AG04450 (cell line): ENCODE measurements at regions of chr13 and their contacts with region 1.

Region 1: GRCh38 chr13:108508263-108508662 is 121.1 kb upstream of the MYO16 start:
- DNase-seq: no peak
- H3K4me3 ChIP-seq: no peak overlapping the region
- H3K27ac ChIP-seq: no peak overlapping the region
- H3K27me3 ChIP-seq: no peaks in the 10 kb centered on the region
- CTCF ChIP-seq: peak; percentile 54

Region 2: DNA sequence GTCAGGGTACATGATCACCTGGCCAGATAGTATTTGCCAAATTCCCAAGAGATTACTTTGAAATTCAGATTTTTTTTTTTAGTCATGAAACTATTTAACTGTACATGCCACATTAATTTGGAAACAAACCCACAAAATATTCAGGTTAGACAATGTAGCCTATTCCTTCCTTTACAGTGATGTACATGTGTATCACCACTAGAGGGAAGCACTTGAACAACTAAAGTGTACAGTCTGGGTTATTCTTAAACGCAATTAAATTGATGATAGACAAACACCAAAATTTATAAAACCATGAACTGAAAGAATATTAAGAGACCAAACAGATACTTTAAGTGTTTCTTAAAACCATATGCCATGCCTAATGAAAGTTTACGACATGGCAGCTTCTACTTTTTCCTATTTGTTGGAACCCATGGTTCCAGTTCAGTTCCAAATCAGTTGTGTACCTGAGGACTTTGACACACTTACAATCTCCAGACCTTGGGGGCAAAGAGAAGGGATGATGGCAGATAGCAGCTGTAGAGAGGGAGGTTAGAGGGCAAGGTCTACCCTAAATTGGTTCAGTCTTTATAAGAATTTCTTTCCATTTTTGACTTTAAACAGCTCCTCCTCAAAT is 185.9 kb before region 1 on chr13:
- CTCF ChIA-PET with region 1: interaction called, 18 read pairs
- POLR2A ChIA-PET with region 1: no interaction called
- DNase-seq: peak; percentile 4
- H3K4me3 ChIP-seq: no peak overlapping the region
- H3K27ac ChIP-seq: no peak overlapping the region
- H3K27me3 ChIP-seq: peaks cover 2% of the 10 kb centered on the region
- CTCF ChIP-seq: peak; percentile 76

Region 3: GRCh38 chr13:108342369-108343289 is 165.6 kb before region 1 on chr13:
- CTCF ChIA-PET with region 1: interaction called, 16 read pairs
- POLR2A ChIA-PET with region 1: no interaction called
- DNase-seq: peak; percentile 6
- H3K4me3 ChIP-seq: no peak overlapping the region
- H3K27ac ChIP-seq: no peak overlapping the region
- H3K27me3 ChIP-seq: peaks cover 3% of the 10 kb centered on the region
- CTCF ChIP-seq: peak; percentile 69